HEK293T (cell line): ENCODE measurements at regions of chr19 and their contacts with region 1.

Region 1: DNA sequence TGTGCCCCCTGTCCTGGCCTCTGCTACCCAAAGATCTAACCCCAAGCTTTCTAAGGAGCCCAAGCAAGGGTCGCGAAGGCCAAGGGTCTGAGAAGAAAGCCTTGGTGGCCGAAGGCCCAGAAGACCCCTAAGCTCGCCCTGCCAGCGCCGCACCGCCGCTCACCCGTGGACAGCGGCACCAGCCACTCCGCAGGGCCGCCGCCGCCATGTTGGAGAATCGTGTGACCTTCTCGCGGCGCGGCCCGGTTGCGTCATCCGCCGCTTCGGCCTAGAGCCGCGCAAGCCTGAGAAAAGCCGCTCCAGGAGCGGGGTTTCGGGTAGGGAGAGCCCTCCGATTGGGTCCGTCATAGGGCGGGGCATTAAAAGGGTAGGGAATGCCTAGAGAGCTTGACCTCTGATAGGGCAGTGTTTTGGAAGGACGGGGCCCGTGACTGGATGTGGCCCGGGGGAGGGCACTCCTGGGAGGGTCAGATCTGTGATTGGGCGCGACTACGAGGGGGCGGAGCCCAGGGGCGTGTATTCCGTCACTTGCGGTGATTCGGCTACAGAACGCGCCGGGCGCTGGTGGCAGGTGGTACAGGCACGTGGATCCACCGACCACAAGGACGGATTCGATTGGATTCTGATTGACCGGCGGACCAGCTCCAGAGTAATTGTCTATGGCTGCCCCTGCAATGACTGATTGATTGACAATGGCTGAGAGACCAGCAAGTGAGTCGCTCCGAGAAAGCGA is at the start of gene TIMM44:
- DNase-seq: peak; percentile 96

Region 2: DNA sequence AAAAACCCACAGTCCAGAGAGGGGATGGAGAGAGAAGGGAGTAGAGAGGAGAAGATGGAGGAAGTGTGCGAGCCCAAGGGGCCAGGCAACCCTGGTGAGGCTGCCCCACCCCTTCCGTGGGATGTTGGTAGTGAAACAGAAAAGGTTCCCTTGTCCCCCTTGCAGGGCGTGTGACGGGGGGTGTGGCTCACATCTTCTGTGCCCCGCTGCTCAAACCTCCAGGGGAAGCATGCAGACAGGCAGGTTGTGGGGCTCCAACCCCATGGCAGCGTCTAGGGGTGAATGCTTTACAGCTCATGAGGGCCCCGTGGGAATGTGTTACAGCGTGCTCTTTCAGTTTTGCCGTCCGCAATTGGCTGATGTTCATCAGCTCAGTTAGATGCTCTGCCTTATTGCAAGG is 128.3 kb before region 1 on chr19:
- CTCF ChIA-PET with region 1: no interaction called
- POLR2A ChIA-PET with region 1: no interaction called
- DNase-seq: no peak

Region 3: DNA sequence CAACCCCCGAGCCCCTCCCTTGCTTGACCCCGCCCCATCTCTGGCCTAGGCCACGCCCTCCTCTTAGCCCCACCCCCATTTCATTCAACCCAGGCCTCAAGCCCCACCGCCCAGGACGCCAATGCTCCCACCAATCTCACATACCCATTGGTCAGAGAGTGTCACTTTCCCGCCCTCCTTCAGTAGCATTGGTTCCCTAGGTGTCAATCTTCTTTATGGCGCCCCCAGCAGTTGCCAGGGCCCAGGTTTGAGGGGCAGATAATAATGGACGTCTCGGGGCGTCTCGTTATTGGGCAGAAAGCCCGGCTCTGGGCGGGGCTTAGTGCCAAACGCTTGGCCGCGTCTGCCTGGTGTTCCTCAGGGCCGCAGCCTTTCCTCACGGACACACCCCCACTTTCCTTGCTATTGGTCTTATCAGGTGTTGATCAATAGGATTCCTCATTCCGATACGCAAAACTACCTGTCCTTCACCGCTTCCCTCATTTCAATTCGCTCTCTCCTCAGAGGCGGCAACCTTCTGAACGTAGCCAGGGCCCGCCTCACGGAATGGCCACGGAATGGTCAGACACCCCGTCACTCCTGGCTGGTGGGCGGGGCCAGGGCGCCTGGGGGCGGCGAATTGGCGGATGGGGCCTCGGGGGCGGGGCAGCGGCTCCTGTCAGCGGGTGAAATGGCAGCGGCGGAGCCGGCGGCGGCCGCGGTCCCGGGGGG is 113.9 kb before region 1 on chr19 and contains the start of gene EVI5L:
- CTCF ChIA-PET with region 1: no interaction called
- POLR2A ChIA-PET with region 1: no interaction called
- DNase-seq: peak; percentile 97

Region 4: DNA sequence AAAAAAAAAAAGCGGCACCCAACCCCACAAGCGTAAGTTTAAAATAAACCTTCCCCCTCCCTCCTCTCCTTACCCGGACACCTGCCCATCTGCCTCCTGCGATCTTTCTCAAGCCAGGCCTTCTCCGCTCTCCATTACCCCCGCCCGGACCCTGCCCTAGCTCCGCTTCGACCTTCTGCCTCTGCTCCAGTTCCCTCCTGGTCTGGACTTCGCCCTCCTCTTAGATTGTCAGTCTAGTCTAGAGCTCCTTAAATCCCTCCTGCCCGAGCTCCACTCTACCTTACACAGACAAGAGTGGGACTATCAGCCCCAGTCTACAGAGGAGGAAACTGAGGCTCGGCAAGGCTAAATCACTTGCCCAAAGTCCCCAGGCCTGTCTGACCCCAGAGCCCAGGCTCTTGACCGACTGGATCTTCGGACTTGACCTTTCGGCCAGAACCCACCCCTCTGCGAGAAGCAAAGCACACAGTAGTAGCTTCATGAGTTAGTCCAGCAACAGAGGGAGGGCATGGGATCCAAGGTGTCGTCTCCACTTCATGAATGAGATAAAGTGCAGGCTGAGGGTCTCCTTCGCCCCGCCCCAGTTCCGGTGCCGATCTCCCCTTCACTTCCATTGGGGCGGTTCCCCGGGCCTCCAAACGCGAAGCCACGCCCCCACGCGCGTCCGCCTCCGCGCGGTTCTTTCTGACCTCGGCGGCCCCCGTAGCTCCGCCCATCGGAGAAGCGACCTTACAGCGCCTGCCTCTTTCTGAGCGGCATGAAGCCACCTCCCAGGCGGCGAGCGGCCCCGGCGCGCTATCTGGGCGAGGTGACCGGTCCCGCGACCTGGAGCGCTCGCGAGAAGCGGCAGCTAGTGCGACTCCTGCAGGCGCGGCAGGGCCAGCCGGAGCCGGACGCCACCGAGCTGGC is 23.7 kb before region 1 on chr19 and contains the start of gene SNAPC2:
- CTCF ChIA-PET with region 1: interaction called, 3 read pairs
- POLR2A ChIA-PET with region 1: interaction called, 27 read pairs
- DNase-seq: peak; percentile 85

Region 5: DNA sequence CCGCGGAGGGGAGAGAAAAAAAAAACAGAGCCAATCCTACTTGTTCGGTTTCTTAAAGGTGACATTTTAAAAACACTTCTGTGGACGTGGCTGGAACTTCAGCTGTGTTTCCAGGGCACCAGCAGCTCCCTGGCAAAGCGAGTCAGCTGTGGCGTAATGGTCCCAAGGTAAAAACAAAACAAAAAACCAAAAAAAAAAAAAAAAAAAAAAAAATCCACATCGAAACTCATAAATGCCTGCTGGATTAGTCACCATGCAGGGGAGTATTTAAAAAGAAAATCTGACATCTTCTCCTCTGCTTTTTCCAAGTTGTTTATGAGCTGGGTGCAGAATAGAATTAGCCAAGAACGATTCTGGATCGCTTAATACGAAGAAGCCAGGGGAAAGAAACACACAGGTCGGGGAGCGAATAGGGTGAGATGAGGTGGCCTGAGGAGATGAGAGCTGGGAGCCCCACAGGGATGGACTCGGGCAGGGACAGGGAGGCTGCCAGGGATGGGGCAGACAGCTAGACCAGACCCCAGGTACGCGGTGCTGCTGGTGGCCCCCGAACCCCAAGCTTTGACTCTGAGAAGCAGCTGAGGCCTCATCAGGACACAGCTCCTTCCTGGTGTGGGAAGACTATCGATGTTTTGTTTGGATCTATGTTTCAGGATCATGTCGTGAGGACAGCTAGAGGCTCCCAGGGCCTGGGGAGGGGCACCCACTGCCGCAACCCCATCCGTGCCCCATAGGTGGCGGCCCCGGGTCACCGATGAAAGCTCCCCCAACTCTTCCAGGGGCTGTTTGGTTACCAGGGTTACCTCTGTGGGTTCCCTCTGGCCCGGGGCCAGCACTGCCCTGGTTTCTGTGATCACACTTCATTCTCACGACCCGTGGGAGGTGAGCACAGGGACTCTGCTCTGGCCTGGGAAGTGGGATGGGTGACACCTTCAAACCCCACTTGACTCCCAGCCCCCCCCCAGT is 14.6 kb before region 1 on chr19:
- CTCF ChIA-PET with region 1: interaction called, 29 read pairs
- POLR2A ChIA-PET with region 1: interaction called, 32 read pairs
- DNase-seq: peak; percentile 47

Region 6: GRCh38 chr19:7973883-7974282 is 30.3 kb after region 1 on chr19:
- CTCF ChIA-PET with region 1: interaction called, 7 read pairs
- POLR2A ChIA-PET with region 1: interaction called, 10 read pairs
- DNase-seq: no peak

Region 7: DNA sequence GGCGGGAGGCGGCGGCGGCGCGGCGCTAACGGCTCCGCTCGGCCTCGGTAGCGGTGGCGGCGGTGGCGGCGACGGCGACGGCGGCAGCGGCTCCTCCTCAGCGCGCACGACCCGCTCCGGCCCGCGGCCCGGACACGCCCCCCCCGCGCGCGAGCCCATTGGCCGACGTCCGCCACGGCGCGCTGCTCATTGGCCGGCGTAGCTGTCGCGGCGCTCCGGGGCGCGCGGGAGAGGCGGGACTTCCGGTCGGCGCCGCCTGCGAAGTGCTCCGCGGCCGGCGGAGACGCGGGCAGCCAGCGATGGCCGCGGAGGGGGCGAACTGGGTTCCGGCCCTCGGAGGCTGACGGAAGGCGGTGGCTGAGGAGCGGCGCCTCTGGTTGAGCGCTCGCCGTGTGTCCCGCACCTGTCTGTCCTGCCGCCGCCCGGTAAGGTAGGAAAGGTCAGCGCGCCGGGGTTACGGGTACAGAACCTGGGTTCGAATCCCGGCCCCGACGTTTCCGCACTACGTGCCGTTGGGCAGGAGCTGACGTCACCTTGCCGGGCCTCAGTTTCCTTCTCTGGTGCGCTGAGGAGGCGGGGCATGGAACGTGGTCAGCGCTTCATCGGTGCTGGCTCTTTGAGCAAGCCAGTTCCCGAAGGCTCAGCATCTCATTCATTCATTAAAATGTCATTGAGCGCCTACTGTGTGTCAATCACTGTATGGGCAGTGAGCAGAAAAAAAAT is 62.1 kb after region 1 on chr19 and contains the start of gene ELAVL1:
- CTCF ChIA-PET with region 1: interaction called, 5 read pairs
- POLR2A ChIA-PET with region 1: interaction called, 12 read pairs
- DNase-seq: peak; percentile 96

Region 8: GRCh38 chr19:8311461-8312376 is 368.1 kb after region 1 on chr19:
- CTCF ChIA-PET with region 1: no interaction called
- POLR2A ChIA-PET with region 1: no interaction called
- DNase-seq: no peak